B cell (primary cell): ENCODE measurements at regions of chr5 and their contacts with region 1.

Region 1: DNA sequence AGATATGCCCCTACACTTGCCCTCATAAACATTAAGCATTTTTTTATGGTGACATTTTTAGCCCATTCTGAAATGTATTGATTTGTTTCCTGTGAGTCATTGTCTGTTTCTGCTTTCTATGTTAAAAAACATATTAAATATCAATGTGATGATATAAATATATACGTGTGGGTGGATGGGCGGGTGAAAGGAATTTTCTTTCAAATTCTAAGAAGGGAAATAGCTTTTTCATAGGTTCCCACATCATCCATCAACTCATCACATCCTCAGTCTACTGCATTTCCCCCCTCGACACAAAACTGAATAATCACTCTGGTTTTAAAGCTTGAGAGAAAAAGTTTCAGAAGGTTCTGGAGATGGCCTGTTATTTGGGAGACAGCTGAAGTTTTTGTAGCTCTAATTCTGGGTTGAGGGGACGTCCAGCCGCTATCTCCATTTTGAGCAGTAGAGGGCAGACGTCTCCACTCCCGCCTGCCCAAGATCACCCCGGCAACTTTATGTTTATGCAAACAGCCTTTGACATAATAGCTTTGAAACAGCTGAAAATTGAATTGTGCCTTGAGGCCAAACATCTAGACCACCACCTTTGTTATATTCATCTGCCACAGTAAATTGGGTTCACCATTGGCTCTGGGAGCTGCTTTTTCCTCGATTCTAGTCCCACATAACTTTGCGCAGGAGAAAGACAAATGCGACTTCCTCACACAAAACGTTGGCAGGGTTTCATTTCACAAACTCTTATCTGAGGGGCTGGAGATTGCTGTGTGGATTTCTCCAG is 216.2 kb upstream of the CLINT1 start:
- DNase-seq: peak; percentile 78
- ATAC-seq: peak; percentile 90
- H3K4me3 ChIP-seq: peak overlapping the region in 2 of 5 experiments; percentile 10 to 20
- H3K4me3 Mint-ChIP-seq: peak overlapping the region; percentile 12
- H3K27ac ChIP-seq: no peak overlapping the region
- H3K27ac Mint-ChIP-seq: peak overlapping the region; percentile 43
- H3K4me1 ChIP-seq: peaks cover 12 to 20% of the 10 kb centered on the region in 2 donors
- H3K4me1 Mint-ChIP-seq: peaks cover 21% of the 10 kb centered on the region
- H3K27me3 ChIP-seq: peaks cover 0 to 3% (median 0%) of the 10 kb centered on the region in 4 experiments
- H3K27me3 Mint-ChIP-seq: no peaks in the 10 kb centered on the region
- CTCF ChIP-seq: peak; percentile 82

Region 2: GRCh38 chr5:158064334-158065123 is 10.7 kb before region 1 on chr5:
- CTCF ChIA-PET with region 1: interaction called, 18 read pairs
- POLR2A ChIA-PET with region 1: no interaction called
- intact Hi-C with region 1: no loop called
- DNase-seq: no peak
- ATAC-seq: no peak
- H3K4me3 ChIP-seq: no peak overlapping the region
- H3K4me3 Mint-ChIP-seq: no peak overlapping the region
- H3K27ac ChIP-seq: no peak overlapping the region
- H3K27ac Mint-ChIP-seq: no peak overlapping the region
- H3K4me1 ChIP-seq: no peaks in the 10 kb centered on the region
- H3K4me1 Mint-ChIP-seq: no peaks in the 10 kb centered on the region
- H3K27me3 ChIP-seq: no peaks in the 10 kb centered on the region
- H3K27me3 Mint-ChIP-seq: peaks cover 18% of the 10 kb centered on the region
- CTCF ChIP-seq: no peak

Region 3: DNA sequence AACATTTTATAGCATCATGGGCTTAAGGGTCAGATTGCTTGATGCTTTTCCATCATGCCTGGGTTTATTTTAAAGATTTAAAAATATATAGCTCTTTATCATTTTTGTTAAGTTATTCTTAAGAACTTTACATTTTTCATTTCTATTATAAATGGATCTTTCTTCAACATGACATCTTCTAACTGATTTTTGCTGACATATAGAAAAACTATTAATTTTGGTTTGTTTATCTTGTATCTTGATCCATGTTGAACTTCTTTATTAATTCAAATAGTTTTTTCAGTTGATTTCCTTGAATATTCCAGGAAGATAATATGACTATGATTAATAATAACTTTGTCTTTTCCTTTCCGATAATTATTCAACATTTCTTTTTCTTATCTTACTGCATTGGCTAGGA is 21.7 kb after region 1 on chr5:
- CTCF ChIA-PET with region 1: interaction called, 13 read pairs
- POLR2A ChIA-PET with region 1: no interaction called
- intact Hi-C with region 1: no loop called
- DNase-seq: no peak
- ATAC-seq: no peak
- H3K4me3 ChIP-seq: no peak overlapping the region
- H3K4me3 Mint-ChIP-seq: no peak overlapping the region
- H3K27ac ChIP-seq: no peak overlapping the region
- H3K27ac Mint-ChIP-seq: no peak overlapping the region
- H3K4me1 ChIP-seq: no peaks in the 10 kb centered on the region
- H3K4me1 Mint-ChIP-seq: peaks cover 2% of the 10 kb centered on the region
- H3K27me3 ChIP-seq: no peaks in the 10 kb centered on the region
- H3K27me3 Mint-ChIP-seq: peaks cover 13% of the 10 kb centered on the region
- CTCF ChIP-seq: no peak

Region 4: GRCh38 chr5:158203261-158203660 is 128.1 kb after region 1 on chr5:
- CTCF ChIA-PET with region 1: no interaction called
- POLR2A ChIA-PET with region 1: no interaction called
- intact Hi-C with region 1: no loop called
- DNase-seq: no peak
- ATAC-seq: no peak
- H3K4me3 ChIP-seq: no peak overlapping the region
- H3K4me3 Mint-ChIP-seq: no peak overlapping the region
- H3K27ac ChIP-seq: no peak overlapping the region
- H3K27ac Mint-ChIP-seq: no peak overlapping the region
- H3K4me1 ChIP-seq: peaks cover 11 to 13% of the 10 kb centered on the region in 2 donors
- H3K4me1 Mint-ChIP-seq: peaks cover 10% of the 10 kb centered on the region
- H3K27me3 ChIP-seq: no peaks in the 10 kb centered on the region
- H3K27me3 Mint-ChIP-seq: no peaks in the 10 kb centered on the region
- CTCF ChIP-seq: no peak